Testis (tissue), 5 donors: ENCODE measurements at regions of chr14 and their contacts with region 1.

Region 1: DNA sequence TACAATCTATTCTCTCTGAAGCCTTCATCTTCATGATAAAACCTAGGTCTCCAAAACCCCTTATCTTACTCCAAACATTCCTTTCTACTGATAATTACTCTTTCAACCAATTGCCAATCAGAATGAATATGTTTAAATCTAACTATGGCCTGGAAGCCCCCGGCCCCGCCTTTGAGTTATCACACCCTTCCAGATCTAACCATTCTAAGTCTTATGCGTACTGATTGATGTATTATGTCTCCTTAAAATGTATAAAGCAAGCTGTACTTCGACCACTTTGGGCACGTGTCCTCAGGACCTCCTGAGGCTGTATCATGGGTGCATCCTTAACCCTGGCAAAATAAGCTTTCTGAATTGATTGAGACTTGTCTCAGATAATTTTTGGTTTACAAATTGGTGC is 14.4 kb downstream of the PABPN1 start:
- DNase-seq: no peak
- H3K4me3 ChIP-seq: no peak overlapping the region
- H3K27ac ChIP-seq: no peak overlapping the region
- H3K4me1 ChIP-seq: no peaks in the 10 kb centered on the region
- H3K27me3 ChIP-seq: no peaks in the 10 kb centered on the region
- CTCF ChIP-seq: no peak
- POLR2A ChIP-seq: no peak

Region 2: GRCh38 chr14:23258256-23258655 is 77.4 kb before region 1 on chr14:
- intact Hi-C with region 1: no loop called
- DNase-seq: no peak
- H3K4me3 ChIP-seq: no peak overlapping the region
- H3K27ac ChIP-seq: no peak overlapping the region
- H3K4me1 ChIP-seq: no peaks in the 10 kb centered on the region
- H3K27me3 ChIP-seq: no peaks in the 10 kb centered on the region
- CTCF ChIP-seq: no peak
- POLR2A ChIP-seq: no peak

Region 3: GRCh38 chr14:23320524-23320773 is 15.2 kb before region 1 on chr14:
- intact Hi-C with region 1: no loop called
- DNase-seq: no peak
- H3K4me3 ChIP-seq: peak overlapping the region; percentile 96 to 99
- H3K27ac ChIP-seq: peak overlapping the region; percentile 80 to 99
- H3K4me1 ChIP-seq: peaks cover 27% of the 10 kb centered on the region
- H3K27me3 ChIP-seq: no peaks in the 10 kb centered on the region
- CTCF ChIP-seq: no peak
- POLR2A ChIP-seq: no peak

Region 4: DNA sequence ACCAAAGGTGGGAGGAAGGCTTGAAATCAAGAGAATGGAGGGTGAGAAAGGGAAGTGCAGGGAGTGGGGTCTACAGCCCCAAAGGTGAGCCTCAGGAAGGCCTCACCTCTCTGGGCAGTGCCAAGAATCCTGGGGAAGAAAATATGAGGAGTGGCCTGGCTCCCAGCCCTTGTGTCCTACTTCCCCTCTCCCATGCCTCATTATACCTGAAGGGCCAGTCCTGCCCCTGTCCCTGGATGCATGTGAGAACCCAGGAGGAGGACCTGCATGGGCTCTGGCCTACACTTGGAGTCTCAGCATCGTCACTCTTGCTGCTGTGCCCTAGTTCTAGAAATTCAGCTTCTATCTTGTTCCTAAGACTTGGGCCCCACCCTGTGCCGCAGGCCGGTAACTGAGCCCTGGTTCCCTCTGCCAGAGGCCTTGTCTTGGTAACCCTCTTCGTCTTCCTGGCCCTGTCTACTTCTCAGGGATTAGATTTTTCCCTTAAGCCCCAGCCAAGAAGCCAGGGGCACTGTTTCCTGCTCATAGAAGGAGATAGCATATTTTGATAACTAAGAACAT is 110.7 kb after region 1 on chr14:
- intact Hi-C with region 1: loop called (anchors 10 kb)
- DNase-seq: peak; percentile 56
- H3K4me3 ChIP-seq: no peak overlapping the region
- H3K27ac ChIP-seq: peak overlapping the region in 1 of 2 donors; percentile 21
- H3K4me1 ChIP-seq: no peaks in the 10 kb centered on the region
- H3K27me3 ChIP-seq: no peaks in the 10 kb centered on the region
- CTCF ChIP-seq: no peak
- POLR2A ChIP-seq: no peak